GM10248 (cell line): ENCODE measurements at regions of chr4 and their contacts with region 1.

Region 1: GRCh38 chr4:139208404-139208945 is 31.5 kb upstream of the ELF2 start:
- DNase-seq: no peak
- CTCF ChIP-seq: no peak

Region 2: DNA sequence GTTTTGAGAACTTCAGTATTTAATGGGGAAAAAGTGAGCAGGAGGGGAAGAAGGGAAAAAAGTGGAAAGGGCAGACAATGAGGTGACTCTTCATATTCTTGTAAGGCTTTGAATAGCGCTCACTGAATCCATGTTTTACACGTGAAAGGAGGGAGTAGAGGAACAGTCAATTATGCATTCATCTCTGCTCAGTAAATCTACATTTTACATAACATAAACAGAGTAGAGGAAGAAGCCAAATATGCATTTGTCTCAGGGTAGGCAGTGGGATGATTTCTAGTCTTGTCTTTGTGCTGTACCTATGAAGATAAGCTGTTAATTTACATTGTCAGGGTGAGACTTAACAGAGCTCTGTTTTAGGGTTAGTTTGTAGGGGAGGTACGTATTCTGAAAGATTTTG is 12.0 kb before region 1 on chr4:
- CTCF ChIA-PET with region 1: interaction called, 11 read pairs
- POLR2A ChIA-PET with region 1: no interaction called
- DNase-seq: no peak
- CTCF ChIP-seq: no peak

Region 3: DNA sequence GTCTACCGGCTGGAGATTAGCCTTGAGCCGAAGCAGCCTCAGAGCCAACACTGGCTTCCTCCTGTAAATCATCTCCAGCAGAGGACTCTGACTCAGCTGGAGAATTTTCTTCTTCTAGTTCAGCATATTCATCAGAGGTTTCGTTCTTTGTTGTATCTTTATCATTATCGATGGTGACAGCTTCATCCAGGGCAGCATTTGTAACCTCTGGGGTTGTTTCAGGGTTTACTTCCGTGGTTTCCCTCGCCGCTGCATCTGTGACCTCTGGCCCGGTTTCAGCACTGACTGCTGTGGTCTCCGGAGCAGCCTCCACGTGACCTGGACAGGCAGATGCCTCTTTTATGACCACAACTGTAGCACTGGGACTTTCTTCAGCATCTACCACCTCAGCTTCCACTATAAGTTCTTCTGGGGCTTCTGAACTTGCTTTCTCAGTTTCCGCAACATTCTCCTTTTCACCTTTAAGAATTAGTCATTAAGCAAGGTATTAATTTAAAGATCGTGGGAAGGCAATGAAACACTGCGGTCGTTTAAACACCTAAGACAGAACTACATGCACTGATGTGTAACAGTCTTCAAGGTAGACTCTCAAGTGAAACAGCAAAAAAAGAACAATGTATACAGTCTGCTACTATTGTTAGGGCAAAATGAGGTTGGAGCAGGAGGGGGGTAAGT is 58.2 kb after region 1 on chr4:
- CTCF ChIA-PET with region 1: no interaction called
- POLR2A ChIA-PET with region 1: no interaction called
- DNase-seq: peak; percentile 88
- CTCF ChIP-seq: no peak